ENCODE measurements at regions of chr6 and their contacts with region 1.

Region 1: GRCh38 chr6:142946181-142946923 is 1.4 kb upstream of the HIVEP2 start:
- DNase-seq: peak; percentile 97
- H3K4me3 Mint-ChIP-seq: peak overlapping the region; percentile 99
- H3K27ac Mint-ChIP-seq: peak overlapping the region; percentile 98
- H3K4me1 Mint-ChIP-seq: peaks cover 29% of the 10 kb centered on the region
- H3K27me3 Mint-ChIP-seq: no peaks in the 10 kb centered on the region

Region 2: DNA sequence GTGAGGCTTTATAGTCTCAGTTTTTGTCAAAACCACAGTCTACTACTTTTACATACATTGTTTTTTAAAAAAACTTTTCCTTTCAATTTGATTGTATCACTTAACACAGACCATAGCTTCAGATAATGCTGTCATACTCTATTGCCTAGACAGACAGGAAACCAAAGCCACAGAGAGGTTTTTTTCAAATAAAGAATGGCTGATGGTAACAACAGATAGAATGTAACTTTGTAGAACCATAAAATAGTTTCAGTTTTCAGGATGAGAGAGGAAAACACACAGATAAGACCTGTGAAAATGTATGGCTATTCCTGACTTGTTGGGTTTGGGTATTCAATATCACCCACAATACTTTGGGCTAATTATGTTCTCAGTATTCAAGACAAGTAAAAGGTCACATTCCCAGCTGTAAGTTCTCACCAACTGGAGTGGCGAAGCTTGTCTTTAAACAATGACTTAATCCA is 550.6 kb before region 1 on chr6:
- CTCF ChIA-PET with region 1: no interaction called
- intact Hi-C with region 1: loop called (anchors 5 kb)
- DNase-seq: no peak
- H3K4me3 Mint-ChIP-seq: no peak overlapping the region
- H3K27ac Mint-ChIP-seq: no peak overlapping the region
- H3K4me1 Mint-ChIP-seq: peaks cover 33% of the 10 kb centered on the region
- H3K27me3 Mint-ChIP-seq: no peaks in the 10 kb centered on the region

Region 3: GRCh38 chr6:142773859-142774648 is 172.3 kb before region 1 on chr6:
- CTCF ChIA-PET with region 1: no interaction called
- intact Hi-C with region 1: loop called (anchors 5 kb)
- DNase-seq: peak; percentile 46
- H3K4me3 Mint-ChIP-seq: no peak overlapping the region
- H3K27ac Mint-ChIP-seq: peak overlapping the region; percentile 79
- H3K4me1 Mint-ChIP-seq: peaks cover 59% of the 10 kb centered on the region
- H3K27me3 Mint-ChIP-seq: no peaks in the 10 kb centered on the region

Region 4: DNA sequence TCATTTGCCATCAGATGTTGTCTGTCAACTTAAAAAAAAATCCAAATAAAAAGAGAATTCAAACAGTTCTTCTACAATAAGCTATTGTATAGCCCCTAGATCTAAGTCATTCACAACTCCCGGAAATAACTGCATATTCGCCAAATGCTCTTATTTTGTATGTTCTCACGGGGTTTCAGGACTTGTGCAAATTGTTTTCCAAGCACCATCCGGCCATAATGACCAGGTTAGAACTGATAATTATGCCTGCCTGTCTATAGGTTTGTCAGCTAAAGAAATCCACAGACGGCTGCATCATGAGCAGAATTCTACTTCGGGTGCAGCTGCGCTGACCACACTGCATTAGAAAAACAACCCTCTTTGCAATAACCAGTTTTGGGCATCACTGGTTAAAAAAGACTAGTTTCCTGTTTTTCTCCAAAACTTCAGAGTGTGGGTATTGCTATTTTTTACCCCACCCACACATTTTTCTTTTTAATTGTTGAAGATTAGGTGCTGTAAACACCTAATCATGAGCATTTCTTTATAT is 89.1 kb before region 1 on chr6:
- CTCF ChIA-PET with region 1: interaction called, 3 read pairs
- intact Hi-C with region 1: loop called (anchors 1 kb)
- DNase-seq: no peak
- H3K4me3 Mint-ChIP-seq: peak overlapping the region; percentile 68
- H3K27ac Mint-ChIP-seq: peak overlapping the region; percentile 69
- H3K4me1 Mint-ChIP-seq: peaks cover 95% of the 10 kb centered on the region
- H3K27me3 Mint-ChIP-seq: no peaks in the 10 kb centered on the region

Region 5: DNA sequence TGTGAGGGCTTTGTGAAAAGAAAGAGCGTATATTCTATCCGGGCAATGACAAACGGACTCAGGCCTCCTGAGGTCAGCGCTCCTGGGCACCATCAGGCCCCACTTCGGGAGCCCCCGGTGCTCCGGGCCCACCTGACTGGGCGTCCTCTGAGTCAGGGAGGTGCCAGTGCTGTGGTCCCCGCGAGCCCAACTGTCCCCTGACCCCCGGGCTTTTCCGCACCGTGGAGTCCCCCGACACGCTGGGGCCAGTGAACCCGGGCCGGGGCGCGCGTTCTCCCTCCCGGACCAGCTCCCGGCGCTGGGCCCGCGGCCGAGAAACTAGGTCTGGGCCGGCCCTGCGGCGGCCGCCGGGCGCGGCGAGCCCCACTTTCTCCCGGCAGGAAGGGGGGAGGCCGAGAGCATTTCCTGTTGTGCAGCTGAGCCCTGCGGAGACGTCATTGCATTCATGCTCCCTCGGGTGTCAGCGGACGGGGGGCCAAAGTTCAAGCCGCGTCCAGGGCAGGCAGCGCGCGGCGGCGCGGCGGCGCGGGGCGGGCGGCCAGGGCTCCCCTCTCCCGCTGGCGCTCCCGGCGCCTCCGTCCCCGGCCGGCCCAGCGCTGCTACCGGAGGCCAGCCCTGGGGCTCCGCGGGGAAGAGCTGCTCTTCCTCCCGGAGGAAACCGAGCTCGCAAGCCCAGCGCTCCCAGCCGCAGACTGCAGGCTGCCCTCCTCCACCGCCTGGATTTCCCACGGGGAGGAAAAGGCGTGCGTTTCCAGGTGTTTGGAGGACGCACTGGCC is 19.7 kb before region 1 on chr6:
- CTCF ChIA-PET with region 1: interaction called, 7 read pairs
- intact Hi-C with region 1: loop called (anchors 1 kb)
- DNase-seq: peak; percentile 80
- H3K4me3 Mint-ChIP-seq: peak overlapping the region; percentile 86
- H3K27ac Mint-ChIP-seq: peak overlapping the region; percentile 97
- H3K4me1 Mint-ChIP-seq: peaks cover 53% of the 10 kb centered on the region
- H3K27me3 Mint-ChIP-seq: no peaks in the 10 kb centered on the region

Region 6: DNA sequence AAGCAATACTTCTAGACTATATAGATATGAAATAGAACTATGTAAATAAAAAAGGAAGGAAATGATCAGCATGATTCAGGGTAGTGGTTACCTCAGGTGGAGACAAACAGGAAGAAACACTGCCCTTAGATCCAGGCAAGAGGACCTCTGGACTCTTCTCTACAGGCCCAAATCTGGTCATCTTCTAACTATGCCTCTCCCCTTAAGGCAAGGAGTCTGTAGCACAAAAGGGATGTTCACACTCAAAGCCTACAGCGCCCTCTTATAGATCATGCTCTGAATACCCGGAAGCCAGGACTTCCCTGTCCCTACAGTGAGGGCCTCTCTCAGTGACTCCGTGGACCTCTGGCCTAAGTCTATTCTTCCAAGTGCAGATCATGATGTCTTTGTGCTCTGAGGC is 29.0 kb after region 1 on chr6:
- CTCF ChIA-PET with region 1: no interaction called
- intact Hi-C with region 1: no loop called
- DNase-seq: no peak
- H3K4me3 Mint-ChIP-seq: no peak overlapping the region
- H3K27ac Mint-ChIP-seq: no peak overlapping the region
- H3K4me1 Mint-ChIP-seq: peaks cover 2% of the 10 kb centered on the region
- H3K27me3 Mint-ChIP-seq: no peaks in the 10 kb centered on the region

Region 7: GRCh38 chr6:143346004-143346403 is 399.7 kb after region 1 on chr6:
- CTCF ChIA-PET with region 1: no interaction called
- intact Hi-C with region 1: no loop called
- DNase-seq: no peak
- H3K4me3 Mint-ChIP-seq: no peak overlapping the region
- H3K27ac Mint-ChIP-seq: no peak overlapping the region
- H3K4me1 Mint-ChIP-seq: no peaks in the 10 kb centered on the region
- H3K27me3 Mint-ChIP-seq: no peaks in the 10 kb centered on the region

Region 8: GRCh38 chr6:143427109-143427817 is 480.9 kb after region 1 on chr6:
- CTCF ChIA-PET with region 1: no interaction called
- intact Hi-C with region 1: loop called (anchors 2 kb)
- DNase-seq: peak; percentile 76
- H3K4me3 Mint-ChIP-seq: no peak overlapping the region
- H3K27ac Mint-ChIP-seq: no peak overlapping the region
- H3K4me1 Mint-ChIP-seq: peaks cover 14% of the 10 kb centered on the region
- H3K27me3 Mint-ChIP-seq: no peaks in the 10 kb centered on the region

Region 9: DNA sequence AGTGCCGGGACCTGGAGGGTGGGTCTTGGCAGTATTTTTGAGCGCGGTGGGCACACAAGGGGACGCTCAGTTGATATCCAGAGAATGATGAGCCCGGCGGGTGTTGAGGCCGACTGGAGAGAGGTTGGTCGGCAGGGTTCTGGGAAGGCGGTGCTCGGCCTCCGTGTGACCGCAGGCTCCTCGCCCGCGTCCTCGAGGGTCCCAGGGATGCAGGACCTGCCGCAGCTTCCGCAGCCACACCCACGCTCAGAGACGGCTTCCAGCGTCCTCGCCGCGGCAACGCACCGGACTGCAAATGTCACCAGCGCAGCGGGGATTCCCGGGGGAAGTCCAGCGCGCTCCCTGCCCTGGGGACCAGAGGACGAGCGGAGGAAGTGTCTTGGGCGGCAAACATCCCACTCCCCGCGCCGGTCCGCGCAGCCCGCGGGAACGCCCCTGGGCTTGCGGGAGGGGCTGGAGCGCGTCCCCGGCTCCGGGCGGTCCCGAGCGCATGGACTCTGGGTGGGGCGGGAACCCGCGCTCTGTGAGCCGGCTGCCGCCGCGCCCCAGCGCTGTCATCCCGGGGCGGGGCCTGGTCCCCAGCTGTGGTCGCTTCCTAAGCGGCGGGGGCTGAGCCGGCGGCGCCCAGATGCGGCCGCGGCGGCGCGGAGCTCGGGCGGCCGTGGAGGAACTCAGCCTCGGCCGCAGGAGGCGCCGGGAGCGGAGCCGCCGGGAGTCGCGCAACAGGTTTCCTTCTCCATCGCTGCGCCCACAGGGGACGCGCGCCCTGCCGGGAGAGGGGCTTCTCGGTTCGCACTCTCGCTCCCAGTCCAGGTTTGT is 1203.7 kb after region 1 on chr6 and contains the start of gene STX11:
- CTCF ChIA-PET with region 1: no interaction called
- intact Hi-C with region 1: loop called (anchors 10 kb)
- DNase-seq: peak; percentile 91
- H3K4me3 Mint-ChIP-seq: peak within 1 kb of the TSS; percentile 81
- H3K27ac Mint-ChIP-seq: peak within 1 kb of the TSS; percentile 93
- H3K4me1 Mint-ChIP-seq: peaks cover 40% of the 10 kb centered on the region
- H3K27me3 Mint-ChIP-seq: no peaks in the 10 kb centered on the region
- total RNA-seq, gene STX11: 17.2 to 17.5 TPM